Aorta (tissue), 5 donors: ENCODE measurements at regions of chr17 and their contacts with region 1.

Region 1: GRCh38 chr17:33595828-33596227 is 302.7 kb upstream of the ASIC2 start:
- DNase-seq: no peak
- ATAC-seq: peak; percentile 38
- H3K4me3 ChIP-seq: no peak overlapping the region
- H3K27ac ChIP-seq: no peak overlapping the region
- H3K4me1 ChIP-seq: no peaks in the 10 kb centered on the region
- H3K27me3 ChIP-seq: no peaks in the 10 kb centered on the region

Region 2: GRCh38 chr17:33438139-33438538 is 157.7 kb before region 1 on chr17:
- intact Hi-C with region 1: no loop called
- DNase-seq: no peak
- ATAC-seq: no peak
- H3K4me3 ChIP-seq: no peak overlapping the region
- H3K27ac ChIP-seq: no peak overlapping the region
- H3K4me1 ChIP-seq: no peaks in the 10 kb centered on the region
- H3K27me3 ChIP-seq: no peaks in the 10 kb centered on the region

Region 3: DNA sequence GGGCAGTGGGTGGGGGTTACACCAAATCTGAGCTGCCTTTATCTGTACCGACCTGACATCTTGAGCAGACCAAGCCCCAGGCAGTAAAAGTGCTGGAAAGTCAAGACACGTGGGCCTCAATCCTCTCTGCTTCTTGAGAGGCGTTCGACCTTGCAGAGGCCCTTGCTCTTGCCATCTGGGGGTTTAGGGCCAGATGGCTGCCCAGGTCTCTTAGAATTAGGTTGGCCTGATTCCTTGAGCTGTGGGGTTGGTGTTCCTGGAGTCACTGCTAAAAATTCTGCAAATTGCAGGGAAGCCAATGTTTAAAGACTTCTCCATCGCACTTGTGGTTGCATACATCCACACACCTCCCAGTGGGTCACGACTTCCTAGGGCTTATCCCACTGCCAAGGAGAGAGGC is 64.5 kb before region 1 on chr17:
- intact Hi-C with region 1: loop called in 1 of 2 experiments (anchors 10 kb)
- DNase-seq: no peak
- ATAC-seq: no peak
- H3K4me3 ChIP-seq: no peak overlapping the region
- H3K27ac ChIP-seq: no peak overlapping the region
- H3K4me1 ChIP-seq: no peaks in the 10 kb centered on the region
- H3K27me3 ChIP-seq: peaks cover 0 to 2% of the 10 kb centered on the region in 2 donors

Region 4: GRCh38 chr17:33647956-33648355 is 52.1 kb after region 1 on chr17:
- intact Hi-C with region 1: no loop called
- DNase-seq: no peak
- ATAC-seq: no peak
- H3K4me3 ChIP-seq: no peak overlapping the region
- H3K27ac ChIP-seq: no peak overlapping the region
- H3K4me1 ChIP-seq: no peaks in the 10 kb centered on the region
- H3K27me3 ChIP-seq: no peaks in the 10 kb centered on the region